ENCODE measurements at regions of chr11 and their contacts with region 1.

Region 1: GRCh38 chr11:128098781-128099180 is 488.6 kb downstream of the ETS1 start:
- DNase-seq: peak; percentile 9
- H3K4me3 Mint-ChIP-seq: no peak overlapping the region
- H3K27ac Mint-ChIP-seq: peak overlapping the region; percentile 76
- H3K4me1 Mint-ChIP-seq: peaks cover 39% of the 10 kb centered on the region
- H3K27me3 Mint-ChIP-seq: no peaks in the 10 kb centered on the region

Region 2: GRCh38 chr11:128086794-128087193 is 12.0 kb before region 1 on chr11:
- CTCF ChIA-PET with region 1: interaction called, 3 read pairs
- intact Hi-C with region 1: loop called (anchors 2 kb)
- DNase-seq: no peak
- H3K4me3 Mint-ChIP-seq: no peak overlapping the region
- H3K27ac Mint-ChIP-seq: no peak overlapping the region
- H3K4me1 Mint-ChIP-seq: peaks cover 44% of the 10 kb centered on the region
- H3K27me3 Mint-ChIP-seq: no peaks in the 10 kb centered on the region

Region 3: GRCh38 chr11:128195057-128195751 is 96.4 kb after region 1 on chr11:
- CTCF ChIA-PET with region 1: no interaction called
- intact Hi-C with region 1: no loop called
- DNase-seq: peak; percentile 77
- H3K4me3 Mint-ChIP-seq: peak overlapping the region; percentile 6
- H3K27ac Mint-ChIP-seq: peak overlapping the region; percentile 32
- H3K4me1 Mint-ChIP-seq: peaks cover 42% of the 10 kb centered on the region
- H3K27me3 Mint-ChIP-seq: no peaks in the 10 kb centered on the region

Region 4: DNA sequence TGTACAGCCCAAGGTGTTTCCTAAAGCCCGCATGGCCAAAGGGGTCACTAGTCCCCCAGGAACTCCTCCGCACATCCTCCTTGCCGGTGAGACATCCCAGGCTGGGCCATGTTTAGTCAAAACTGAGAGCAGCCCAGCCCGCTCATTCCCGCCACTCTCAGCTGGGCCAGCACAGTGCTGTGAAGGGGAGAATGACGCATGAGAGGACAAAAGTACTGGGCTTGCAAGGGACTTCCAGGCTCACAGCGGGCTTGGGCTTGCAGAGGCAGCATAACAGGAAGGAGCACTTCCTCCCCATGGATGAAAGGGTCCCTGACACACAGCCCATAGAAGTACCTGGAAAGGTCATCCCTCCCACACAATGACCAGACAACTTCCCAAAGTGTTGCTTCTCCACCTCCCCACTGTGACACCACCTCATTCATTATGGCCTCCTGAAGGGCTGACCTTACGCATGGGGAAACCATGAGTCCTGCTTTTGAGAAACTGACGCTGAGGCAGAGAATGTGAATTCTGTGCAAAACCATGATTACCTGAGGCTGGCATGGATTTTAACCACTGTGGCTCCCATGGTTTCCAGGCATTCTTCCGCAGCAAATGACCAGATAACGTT is 469.5 kb after region 1 on chr11:
- CTCF ChIA-PET with region 1: no interaction called
- intact Hi-C with region 1: no loop called
- DNase-seq: peak; percentile 64
- H3K4me3 Mint-ChIP-seq: no peak overlapping the region
- H3K27ac Mint-ChIP-seq: no peak overlapping the region
- H3K4me1 Mint-ChIP-seq: peaks cover 28% of the 10 kb centered on the region
- H3K27me3 Mint-ChIP-seq: no peaks in the 10 kb centered on the region